Ascending aorta (tissue), 2 donors: ENCODE measurements at regions of chr15 and their contacts with region 1.

Region 1: DNA sequence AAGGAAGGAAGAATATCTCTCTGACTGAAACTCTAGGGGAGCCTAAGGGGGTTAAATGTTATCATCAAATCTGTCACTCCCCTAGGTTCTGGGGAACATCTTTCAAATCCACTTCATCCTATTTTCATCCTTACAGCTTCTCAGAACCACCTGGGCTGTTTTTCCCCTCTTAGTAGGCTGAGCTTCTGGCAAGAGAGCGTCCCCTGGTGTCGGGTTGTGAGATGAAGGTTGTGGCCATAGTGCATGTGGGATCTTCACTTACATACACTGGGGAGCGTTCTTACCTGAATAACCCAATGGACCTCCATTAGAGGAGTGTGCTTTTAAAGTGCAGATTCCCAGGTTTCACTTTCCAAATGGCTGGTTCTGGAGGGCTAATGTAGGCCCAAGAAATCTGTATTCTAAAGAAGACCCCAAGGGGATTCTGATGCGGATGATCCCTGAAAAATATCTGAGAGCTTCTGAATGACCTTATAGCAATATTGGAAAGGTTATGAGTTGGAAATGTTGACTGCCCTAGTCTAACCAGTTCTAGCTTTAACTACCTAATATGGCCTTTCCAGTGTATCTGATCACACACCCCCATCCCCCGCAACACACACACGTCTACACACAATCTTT is 663.7 kb downstream of the AGBL1 start:
- DNase-seq: no peak
- H3K4me3 ChIP-seq: no peak overlapping the region
- H3K27ac ChIP-seq: no peak overlapping the region
- H3K4me1 ChIP-seq: no peaks in the 10 kb centered on the region
- H3K27me3 ChIP-seq: no peaks in the 10 kb centered on the region
- CTCF ChIP-seq: peak in 1 of 3 experiments; percentile 6

Region 2: GRCh38 chr15:86689006-86689405 is 54.4 kb before region 1 on chr15:
- intact Hi-C with region 1: loop called (anchors 10 kb)
- DNase-seq: no peak
- H3K4me3 ChIP-seq: no peak overlapping the region
- H3K27ac ChIP-seq: no peak overlapping the region
- H3K4me1 ChIP-seq: no peaks in the 10 kb centered on the region
- H3K27me3 ChIP-seq: no peaks in the 10 kb centered on the region
- CTCF ChIP-seq: no peak

Region 3: GRCh38 chr15:86765281-86765680 is 21.9 kb after region 1 on chr15:
- intact Hi-C with region 1: no loop called
- DNase-seq: no peak
- H3K4me3 ChIP-seq: no peak overlapping the region
- H3K27ac ChIP-seq: no peak overlapping the region
- H3K4me1 ChIP-seq: no peaks in the 10 kb centered on the region
- H3K27me3 ChIP-seq: no peaks in the 10 kb centered on the region
- CTCF ChIP-seq: no peak